CD8-positive, alpha-beta T cell (primary cell): ENCODE measurements at regions of chr13 and their contacts with region 1.

Region 1: GRCh38 chr13:100530671-100531213 is 57.8 kb downstream of the GGACT start:
- DNase-seq: peak in 1 of 9 experiments; percentile 17
- ATAC-seq: no peak
- H3K4me3 ChIP-seq: no peak overlapping the region
- H3K4me3 Mint-ChIP-seq: no peak overlapping the region
- H3K27ac ChIP-seq: no peak overlapping the region
- H3K27ac Mint-ChIP-seq: no peak overlapping the region
- H3K4me1 ChIP-seq: no peaks in the 10 kb centered on the region
- H3K4me1 Mint-ChIP-seq: no peaks in the 10 kb centered on the region
- H3K27me3 ChIP-seq: no peaks in the 10 kb centered on the region
- H3K27me3 Mint-ChIP-seq: no peaks in the 10 kb centered on the region
- CTCF ChIP-seq: no peak

Region 2: DNA sequence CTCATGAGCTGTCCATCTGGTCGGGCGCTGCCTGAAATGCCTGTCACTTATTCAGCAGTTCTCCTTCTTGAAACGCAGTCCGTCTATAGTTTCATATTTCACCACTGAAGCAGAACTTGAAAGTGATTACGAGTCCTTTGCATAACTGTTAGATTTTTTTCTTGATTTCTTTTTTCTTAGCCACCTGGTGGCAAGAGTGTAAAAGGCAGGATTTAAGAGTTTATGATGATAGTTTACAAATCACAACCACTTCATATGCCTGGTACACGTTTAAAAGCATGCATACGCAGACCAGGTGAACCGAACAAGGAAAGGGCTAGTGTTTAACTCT is 12.0 kb after region 1 on chr13:
- CTCF ChIA-PET with region 1: interaction called, 12 read pairs
- POLR2A ChIA-PET with region 1: no interaction called
- intact Hi-C with region 1: no loop called
- DNase-seq: peak in 2 of 9 experiments; percentile 30 to 55
- ATAC-seq: peak; percentile 69
- H3K4me3 ChIP-seq: no peak overlapping the region
- H3K4me3 Mint-ChIP-seq: peak overlapping the region; percentile 52
- H3K27ac ChIP-seq: no peak overlapping the region
- H3K27ac Mint-ChIP-seq: no peak overlapping the region
- H3K4me1 ChIP-seq: peaks cover 10% of the 10 kb centered on the region
- H3K4me1 Mint-ChIP-seq: peaks cover 28% of the 10 kb centered on the region
- H3K27me3 ChIP-seq: no peaks in the 10 kb centered on the region
- H3K27me3 Mint-ChIP-seq: no peaks in the 10 kb centered on the region
- CTCF ChIP-seq: peak; percentile 54